ENCODE measurements at regions of chr11 and their contacts with region 1.

Region 1: DNA sequence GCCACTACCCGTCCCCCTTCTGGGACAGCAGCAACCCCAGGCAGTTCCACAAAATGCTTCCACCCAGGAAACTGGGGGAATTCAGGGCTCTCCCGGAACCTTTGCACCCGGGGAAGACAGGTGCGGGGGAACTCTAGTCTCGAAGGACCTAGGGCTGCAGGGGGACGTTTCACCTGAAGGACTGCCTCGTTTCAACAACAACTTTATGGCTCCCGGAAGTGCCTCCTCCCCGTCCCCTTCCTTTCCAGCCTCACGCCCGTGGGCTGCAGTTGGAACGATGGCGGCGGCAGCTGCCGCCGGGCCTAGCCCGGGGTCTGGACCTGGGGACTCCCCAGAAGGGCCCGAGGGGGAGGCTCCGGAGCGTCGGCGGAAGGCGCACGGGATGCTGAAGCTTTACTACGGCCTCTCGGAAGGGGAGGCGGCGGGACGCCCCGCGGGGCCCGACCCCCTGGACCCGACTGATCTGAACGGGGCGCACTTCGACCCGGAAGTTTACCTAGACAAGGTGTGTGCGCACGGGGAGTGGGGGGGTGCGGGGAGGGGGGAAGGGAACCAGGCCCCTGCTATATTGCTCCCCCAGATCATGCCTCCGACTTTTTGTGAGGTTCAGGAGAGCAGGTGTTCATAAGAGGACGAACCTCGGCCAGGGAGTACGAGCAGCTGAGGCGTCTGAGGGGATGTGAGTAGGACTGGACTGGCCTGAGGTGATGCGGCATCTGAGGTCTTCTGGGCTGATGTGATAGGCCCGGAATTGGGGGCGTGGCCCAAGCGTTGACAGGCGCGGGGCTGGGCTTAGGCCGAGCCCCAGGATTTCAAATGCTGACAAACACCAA is at the start of gene VPS51:
- DNase-seq: peak; percentile 76 to 94 (median 83)
- ATAC-seq: peak; percentile 85
- H3K4me3 ChIP-seq: peak within 1 kb of the TSS; percentile 79
- H3K4me3 Mint-ChIP-seq: peak within 1 kb of the TSS; percentile 96
- H3K27ac ChIP-seq: peak within 1 kb of the TSS; percentile 78 to 85
- H3K27ac Mint-ChIP-seq: peak within 1 kb of the TSS; percentile 98
- H3K4me1 ChIP-seq: peaks cover 23% of the 10 kb centered on the region
- H3K4me1 Mint-ChIP-seq: peaks cover 21% of the 10 kb centered on the region
- H3K27me3 ChIP-seq: no peaks in the 10 kb centered on the region
- H3K27me3 Mint-ChIP-seq: no peaks in the 10 kb centered on the region
- CTCF ChIP-seq: no peak
- total RNA-seq, gene VPS51: 243 to 246 TPM

Region 2: DNA sequence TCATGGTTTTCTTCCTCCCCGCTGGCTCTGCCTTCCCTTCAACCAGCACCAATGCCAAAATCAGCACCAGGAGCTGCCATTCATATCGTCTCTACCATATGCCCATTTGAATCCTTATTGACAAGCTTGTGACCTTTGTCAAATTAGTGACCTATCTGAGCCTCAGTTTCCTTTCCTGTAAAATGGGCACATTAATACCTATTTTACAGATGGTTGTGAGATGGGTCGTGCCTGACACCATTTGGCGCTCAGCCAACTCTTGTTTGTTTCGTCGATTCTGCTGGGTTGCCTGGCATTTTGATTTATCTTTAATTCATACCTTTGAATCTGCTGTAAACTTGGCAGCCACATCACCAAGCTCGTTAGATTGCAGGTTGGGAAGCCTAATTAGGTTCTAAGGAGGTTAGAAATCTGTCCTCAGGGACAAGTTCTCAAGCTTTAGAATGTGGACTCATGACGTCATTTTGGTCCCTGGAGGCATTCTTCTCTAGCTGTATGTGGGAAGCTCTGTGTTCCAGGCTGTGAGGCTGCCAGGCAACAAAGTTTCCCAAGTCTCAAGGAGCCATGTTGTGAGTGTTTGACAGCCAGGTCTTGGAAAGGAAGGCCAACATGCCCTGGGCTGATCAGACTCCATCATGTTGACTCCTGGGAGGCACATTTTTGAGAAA is 676.2 kb before region 1 on chr11:
- CTCF ChIA-PET with region 1: no interaction called
- POLR2A ChIA-PET with region 1: no interaction called
- intact Hi-C with region 1: no loop called
- DNase-seq: no peak
- ATAC-seq: no peak
- H3K4me3 ChIP-seq: no peak overlapping the region
- H3K4me3 Mint-ChIP-seq: no peak overlapping the region
- H3K27ac ChIP-seq: no peak overlapping the region
- H3K27ac Mint-ChIP-seq: no peak overlapping the region
- H3K4me1 ChIP-seq: peaks cover 4% of the 10 kb centered on the region
- H3K4me1 Mint-ChIP-seq: no peaks in the 10 kb centered on the region
- H3K27me3 ChIP-seq: no peaks in the 10 kb centered on the region
- H3K27me3 Mint-ChIP-seq: no peaks in the 10 kb centered on the region
- CTCF ChIP-seq: no peak

Region 3: GRCh38 chr11:64803163-64803845 is 292.9 kb before region 1 on chr11 and contains the start of gene MAP4K2:
- CTCF ChIA-PET with region 1: no interaction called
- POLR2A ChIA-PET with region 1: no interaction called
- intact Hi-C with region 1: no loop called
- DNase-seq: peak; percentile 67 to 97 (median 83)
- ATAC-seq: peak; percentile 86
- H3K4me3 ChIP-seq: peak within 1 kb of the TSS; percentile 85
- H3K4me3 Mint-ChIP-seq: peak within 1 kb of the TSS; percentile 91
- H3K27ac ChIP-seq: peak within 1 kb of the TSS; percentile 86 to 95
- H3K27ac Mint-ChIP-seq: peak within 1 kb of the TSS; percentile 91
- H3K4me1 ChIP-seq: peaks cover 41% of the 10 kb centered on the region
- H3K4me1 Mint-ChIP-seq: peaks cover 38% of the 10 kb centered on the region
- H3K27me3 ChIP-seq: no peaks in the 10 kb centered on the region
- H3K27me3 Mint-ChIP-seq: no peaks in the 10 kb centered on the region
- CTCF ChIP-seq: no peak
- total RNA-seq, gene MAP4K2: 71.9 to 74.1 TPM

Region 4: DNA sequence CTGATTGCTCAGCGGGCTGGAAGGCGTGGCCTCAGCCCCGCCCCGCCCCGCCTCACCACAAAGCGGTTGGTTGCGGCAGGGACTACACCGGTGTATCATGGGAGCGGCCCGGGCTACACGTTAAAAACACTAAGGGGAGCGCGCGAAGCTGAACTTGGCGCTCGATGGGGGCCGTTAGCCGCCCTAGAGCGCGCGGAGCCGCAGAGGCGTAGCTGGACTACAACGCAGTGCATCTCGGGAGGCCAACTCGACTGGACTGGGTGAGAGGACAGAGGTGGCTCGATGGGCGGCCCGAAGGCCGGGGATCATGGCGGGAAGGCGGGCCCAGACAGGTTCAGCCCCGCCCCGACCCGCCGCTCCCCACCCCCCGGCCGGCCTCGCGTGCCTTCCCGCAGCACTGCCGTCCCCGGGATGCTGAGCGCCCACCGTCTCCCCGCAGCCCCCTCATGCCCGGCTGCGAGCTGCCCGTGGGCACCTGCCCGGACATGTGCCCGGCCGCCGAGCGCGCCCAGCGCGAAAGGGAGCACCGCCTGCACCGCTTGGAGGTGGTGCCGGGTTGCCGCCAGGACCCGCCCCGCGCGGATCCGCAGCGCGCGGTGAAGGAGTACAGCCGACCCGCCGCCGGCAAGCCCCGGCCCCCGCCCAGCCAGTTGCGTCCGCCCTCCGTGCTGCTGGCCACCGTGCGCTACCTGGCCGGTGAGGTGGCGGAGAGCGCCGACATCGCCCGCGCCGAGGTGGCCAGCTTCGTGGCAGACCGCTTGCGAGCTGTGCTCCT is 55.2 kb before region 1 on chr11 and contains the start of gene SAC3D1:
- CTCF ChIA-PET with region 1: no interaction called
- POLR2A ChIA-PET with region 1: interaction called, 10 read pairs
- intact Hi-C with region 1: no loop called
- DNase-seq: peak; percentile 70 to 95 (median 80)
- ATAC-seq: peak; percentile 87
- H3K4me3 ChIP-seq: peak within 1 kb of the TSS; percentile 82
- H3K4me3 Mint-ChIP-seq: peak within 1 kb of the TSS; percentile 98
- H3K27ac ChIP-seq: peak within 1 kb of the TSS; percentile 56 to 84
- H3K27ac Mint-ChIP-seq: peak within 1 kb of the TSS; percentile 93
- H3K4me1 ChIP-seq: peaks cover 32% of the 10 kb centered on the region
- H3K4me1 Mint-ChIP-seq: peaks cover 20% of the 10 kb centered on the region
- H3K27me3 ChIP-seq: no peaks in the 10 kb centered on the region
- H3K27me3 Mint-ChIP-seq: no peaks in the 10 kb centered on the region
- CTCF ChIP-seq: no peak
- total RNA-seq, gene SAC3D1: 0.49 to 0.78 TPM

Region 5: GRCh38 chr11:65083834-65084597 is 12.2 kb before region 1 on chr11 and contains the starts of genes CDCA5 and ZFPL1:
- CTCF ChIA-PET with region 1: interaction called, 4 read pairs
- POLR2A ChIA-PET with region 1: interaction called, 9 read pairs
- intact Hi-C with region 1: loop called (anchors 1 kb)
- DNase-seq: peak; percentile 92 to 98 (median 95)
- ATAC-seq: peak; percentile 87
- H3K4me3 ChIP-seq: peak within 1 kb of the TSS; percentile 80
- H3K4me3 Mint-ChIP-seq: peak within 1 kb of the TSS; percentile 98
- H3K27ac ChIP-seq: peak within 1 kb of the TSS; percentile 86 to 97
- H3K27ac Mint-ChIP-seq: peak within 1 kb of the TSS; percentile 97
- H3K4me1 ChIP-seq: peaks cover 21% of the 10 kb centered on the region
- H3K4me1 Mint-ChIP-seq: peaks cover 33% of the 10 kb centered on the region
- H3K27me3 ChIP-seq: no peaks in the 10 kb centered on the region
- H3K27me3 Mint-ChIP-seq: no peaks in the 10 kb centered on the region
- CTCF ChIP-seq: no peak
- total RNA-seq, gene CDCA5: 0.77 to 0.84 TPM
- total RNA-seq, gene ZFPL1: 46.2 to 47.7 TPM

Region 6: GRCh38 chr11:65111744-65112414 is 15.7 kb after region 1 on chr11 and contains the start of gene TM7SF2:
- CTCF ChIA-PET with region 1: interaction called, 58 read pairs
- POLR2A ChIA-PET with region 1: interaction called, 91 read pairs
- intact Hi-C with region 1: loop called (anchors 1 kb)
- DNase-seq: peak; percentile 88 to 98 (median 94)
- ATAC-seq: peak; percentile 75
- H3K4me3 ChIP-seq: peak within 1 kb of the TSS; percentile 81
- H3K4me3 Mint-ChIP-seq: peak within 1 kb of the TSS; percentile 95
- H3K27ac ChIP-seq: peak within 1 kb of the TSS; percentile 62 to 68
- H3K27ac Mint-ChIP-seq: peak within 1 kb of the TSS; percentile 92
- H3K4me1 ChIP-seq: peaks cover 63% of the 10 kb centered on the region
- H3K4me1 Mint-ChIP-seq: peaks cover 36% of the 10 kb centered on the region
- H3K27me3 ChIP-seq: no peaks in the 10 kb centered on the region
- H3K27me3 Mint-ChIP-seq: no peaks in the 10 kb centered on the region
- CTCF ChIP-seq: no peak
- total RNA-seq, gene TM7SF2: 20.0 to 20.4 TPM

Measured in CD4-positive, alpha-beta T cell (primary cell).